ENCODE measurements at regions of chr10 and their contacts with region 1.

Region 1: DNA sequence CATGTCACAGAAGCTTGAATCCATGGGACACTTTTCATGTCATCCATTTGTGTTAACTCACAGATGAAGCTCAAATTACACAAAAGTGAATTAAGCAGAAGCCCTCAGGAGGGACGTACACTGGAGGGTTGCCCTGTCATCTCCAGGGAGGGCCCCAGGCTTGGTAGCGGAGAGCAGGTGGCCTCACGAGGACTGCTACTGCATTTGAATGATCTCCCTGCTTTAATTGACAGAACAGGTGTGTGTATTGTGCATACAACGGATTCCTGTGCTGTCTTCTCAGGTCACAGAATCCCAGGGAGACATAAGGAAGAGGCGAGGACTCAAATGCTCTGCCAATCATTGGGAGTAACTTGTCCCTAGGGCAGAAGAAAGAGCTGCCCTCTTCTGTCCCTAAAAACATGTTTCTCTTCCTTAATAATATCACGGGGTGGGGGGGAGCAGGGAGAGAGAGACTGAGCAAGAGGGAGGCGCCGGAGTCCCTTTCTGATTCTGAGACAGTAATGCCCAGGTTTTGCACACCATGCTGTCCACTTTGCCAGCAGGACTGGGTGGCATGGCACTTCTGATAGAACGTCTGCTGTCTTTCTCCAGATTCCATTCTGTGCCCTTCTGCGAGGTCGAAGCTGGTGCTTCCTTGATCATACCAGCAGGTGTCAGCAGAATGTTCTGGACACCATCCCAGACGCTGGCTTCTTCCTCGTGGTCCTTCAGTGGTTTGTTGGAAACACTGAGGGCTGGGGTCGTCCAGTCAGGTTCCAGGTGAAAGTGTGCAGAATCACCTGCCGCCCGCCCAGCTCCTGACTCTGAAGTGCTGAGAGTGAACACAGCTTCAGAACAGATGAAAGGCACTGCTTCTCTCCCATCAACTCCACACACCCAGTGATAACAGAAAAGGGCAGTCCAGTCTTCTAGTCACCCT is 26.2 kb upstream of the RASGEF1A start:
- DNase-seq: peak; percentile 65
- H3K4me3 Mint-ChIP-seq: no peak overlapping the region
- H3K27ac Mint-ChIP-seq: peak overlapping the region; percentile 88
- H3K4me1 Mint-ChIP-seq: peaks cover 81% of the 10 kb centered on the region
- H3K27me3 Mint-ChIP-seq: peaks cover 21% of the 10 kb centered on the region

Region 2: GRCh38 chr10:43035800-43036199 is 257.2 kb before region 1 on chr10:
- CTCF ChIA-PET with region 1: no interaction called
- DNase-seq: no peak
- H3K4me3 Mint-ChIP-seq: no peak overlapping the region
- H3K27ac Mint-ChIP-seq: no peak overlapping the region
- H3K4me1 Mint-ChIP-seq: no peaks in the 10 kb centered on the region
- H3K27me3 Mint-ChIP-seq: no peaks in the 10 kb centered on the region

Region 3: GRCh38 chr10:43265799-43266721 is 27.0 kb before region 1 on chr10:
- CTCF ChIA-PET with region 1: interaction called, 21 read pairs
- DNase-seq: peak; percentile 71
- H3K4me3 Mint-ChIP-seq: peak overlapping the region; percentile 76
- H3K27ac Mint-ChIP-seq: no peak overlapping the region
- H3K4me1 Mint-ChIP-seq: peaks cover 9% of the 10 kb centered on the region
- H3K27me3 Mint-ChIP-seq: peaks cover 87% of the 10 kb centered on the region

Region 4: GRCh38 chr10:43304687-43305340 is 11.8 kb after region 1 on chr10:
- CTCF ChIA-PET with region 1: interaction called, 14 read pairs
- DNase-seq: peak; percentile 71
- H3K4me3 Mint-ChIP-seq: peak overlapping the region; percentile 58
- H3K27ac Mint-ChIP-seq: peak overlapping the region; percentile 78
- H3K4me1 Mint-ChIP-seq: peaks cover 63% of the 10 kb centered on the region
- H3K27me3 Mint-ChIP-seq: peaks cover 26% of the 10 kb centered on the region

Region 5: DNA sequence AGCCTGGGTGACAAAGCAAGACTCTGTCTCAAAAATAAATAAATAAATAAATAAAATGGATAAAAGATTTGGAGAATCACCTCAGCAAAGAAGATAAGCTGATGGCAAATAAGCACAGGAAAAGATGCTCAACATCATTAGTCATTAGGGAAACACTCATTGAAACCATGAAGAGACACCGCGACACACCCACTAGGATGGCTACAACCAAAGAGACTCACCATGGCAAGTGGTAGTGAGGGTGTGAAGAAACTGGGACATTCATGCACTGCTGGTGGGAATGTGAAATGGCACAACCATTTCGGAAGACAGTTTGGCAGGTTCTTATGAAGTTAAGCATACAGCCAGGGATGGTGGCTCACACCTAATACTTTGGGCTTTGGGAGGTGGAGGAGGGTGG is 40.6 kb after region 1 on chr10:
- CTCF ChIA-PET with region 1: interaction called, 11 read pairs
- DNase-seq: no peak
- H3K4me3 Mint-ChIP-seq: no peak overlapping the region
- H3K27ac Mint-ChIP-seq: no peak overlapping the region
- H3K4me1 Mint-ChIP-seq: peaks cover 40% of the 10 kb centered on the region
- H3K27me3 Mint-ChIP-seq: peaks cover 28% of the 10 kb centered on the region

Region 6: DNA sequence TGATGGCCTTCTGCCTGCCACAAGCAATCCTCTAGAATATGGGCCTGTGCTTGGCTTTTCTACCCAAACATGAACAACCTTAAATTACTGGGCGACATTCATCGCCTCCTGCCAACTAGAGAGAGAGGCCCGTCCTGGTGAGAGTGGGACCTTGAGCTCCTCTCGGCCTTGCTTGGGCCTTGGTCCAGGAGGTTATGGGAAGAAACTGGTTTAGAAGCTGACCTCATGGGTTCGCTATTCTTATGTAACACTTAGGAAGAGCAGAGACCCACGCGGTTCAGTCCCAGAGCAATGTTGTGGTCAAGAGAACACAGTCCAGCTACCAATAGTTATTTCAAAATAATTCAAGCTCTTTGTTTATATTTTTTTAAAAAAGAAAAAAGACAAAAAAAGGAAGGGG is 531.9 kb after region 1 on chr10:
- CTCF ChIA-PET with region 1: no interaction called
- DNase-seq: no peak
- H3K4me3 Mint-ChIP-seq: no peak overlapping the region
- H3K27ac Mint-ChIP-seq: no peak overlapping the region
- H3K4me1 Mint-ChIP-seq: peaks cover 27% of the 10 kb centered on the region
- H3K27me3 Mint-ChIP-seq: peaks cover 8% of the 10 kb centered on the region

Measured in activated naive CD4-positive, alpha-beta T cell treated with anti-CD3 and anti-CD28 coated beads, Interleukin-2, amount 10 ng/mL, durations not matched to agents 7 days and 5 days (primary cell).